CD4-positive, alpha-beta memory T cell (primary cell): ENCODE measurements at regions of chr4 and their contacts with region 1.

Region 1: DNA sequence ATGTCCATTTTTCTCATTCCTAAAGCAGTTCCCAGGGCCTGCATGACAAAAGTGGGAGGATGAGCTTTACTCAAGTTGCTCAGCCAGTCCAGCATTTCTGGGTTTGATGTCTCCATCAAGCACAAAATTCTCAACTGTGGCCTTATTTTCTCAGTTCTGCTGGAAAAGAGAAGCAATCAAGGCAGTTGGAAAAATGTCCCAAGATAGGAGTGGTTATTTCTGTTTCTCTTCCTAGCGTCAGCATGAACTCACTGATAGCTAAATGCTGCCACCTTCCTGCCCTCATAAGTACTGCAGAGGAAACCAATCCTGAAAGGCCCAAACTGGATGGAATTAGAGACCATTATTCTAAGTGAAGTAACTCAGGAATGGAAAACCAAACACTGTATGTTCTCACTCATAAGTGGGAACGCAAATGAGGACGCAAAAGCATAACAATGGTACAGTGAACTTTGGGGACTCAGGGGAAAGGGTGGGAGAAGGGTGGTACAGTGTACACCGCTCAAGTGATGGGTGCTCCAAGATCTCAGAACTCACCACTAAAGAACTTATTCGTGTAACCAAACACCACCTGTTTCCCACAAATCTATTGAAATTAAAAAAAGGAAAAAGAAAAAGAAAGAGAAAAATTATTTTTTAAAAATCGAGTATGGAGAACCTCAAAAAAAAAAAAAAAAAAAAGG is 29.6 kb downstream of the ADH7 start:
- DNase-seq: peak; percentile 43 to 60 (median 49)
- H3K4me3 ChIP-seq: no peak overlapping the region
- H3K4me3 Mint-ChIP-seq: no peak overlapping the region
- H3K27ac ChIP-seq: no peak overlapping the region
- H3K27ac Mint-ChIP-seq: no peak overlapping the region
- H3K4me1 ChIP-seq: no peaks in the 10 kb centered on the region
- H3K4me1 Mint-ChIP-seq: peaks cover 0 to 4% (median 2%) of the 10 kb centered on the region in 4 donors
- H3K27me3 ChIP-seq: no peaks in the 10 kb centered on the region
- H3K27me3 Mint-ChIP-seq: peaks cover 0 to 1% of the 10 kb centered on the region in 2 donors

Region 2: GRCh38 chr4:98113012-98113411 is 1292.6 kb before region 1 on chr4:
- CTCF ChIA-PET with region 1: no interaction called
- POLR2A ChIA-PET with region 1: no interaction called
- intact Hi-C with region 1: loop called (anchors 1 kb)
- DNase-seq: peak in 1 of 5 donors; percentile 5
- H3K4me3 ChIP-seq: no peak overlapping the region
- H3K4me3 Mint-ChIP-seq: no peak overlapping the region
- H3K27ac ChIP-seq: no peak overlapping the region
- H3K27ac Mint-ChIP-seq: no peak overlapping the region
- H3K4me1 ChIP-seq: no peaks in the 10 kb centered on the region
- H3K4me1 Mint-ChIP-seq: no peaks in the 10 kb centered on the region
- H3K27me3 ChIP-seq: no peaks in the 10 kb centered on the region
- H3K27me3 Mint-ChIP-seq: peaks cover 2 to 5% of the 10 kb centered on the region in 2 donors

Region 3: GRCh38 chr4:98150092-98150761 is 1255.3 kb before region 1 on chr4:
- CTCF ChIA-PET with region 1: no interaction called
- POLR2A ChIA-PET with region 1: no interaction called
- intact Hi-C with region 1: loop called (anchors 1 kb)
- DNase-seq: peak in 1 of 5 donors; percentile 3
- H3K4me3 ChIP-seq: no peak overlapping the region
- H3K4me3 Mint-ChIP-seq: no peak overlapping the region
- H3K27ac ChIP-seq: no peak overlapping the region
- H3K27ac Mint-ChIP-seq: no peak overlapping the region
- H3K4me1 ChIP-seq: peaks cover 16% of the 10 kb centered on the region
- H3K4me1 Mint-ChIP-seq: peaks cover 5 to 18% (median 9%) of the 10 kb centered on the region in 4 donors
- H3K27me3 ChIP-seq: no peaks in the 10 kb centered on the region
- H3K27me3 Mint-ChIP-seq: peaks cover 0 to 1% of the 10 kb centered on the region in 2 donors

Region 4: DNA sequence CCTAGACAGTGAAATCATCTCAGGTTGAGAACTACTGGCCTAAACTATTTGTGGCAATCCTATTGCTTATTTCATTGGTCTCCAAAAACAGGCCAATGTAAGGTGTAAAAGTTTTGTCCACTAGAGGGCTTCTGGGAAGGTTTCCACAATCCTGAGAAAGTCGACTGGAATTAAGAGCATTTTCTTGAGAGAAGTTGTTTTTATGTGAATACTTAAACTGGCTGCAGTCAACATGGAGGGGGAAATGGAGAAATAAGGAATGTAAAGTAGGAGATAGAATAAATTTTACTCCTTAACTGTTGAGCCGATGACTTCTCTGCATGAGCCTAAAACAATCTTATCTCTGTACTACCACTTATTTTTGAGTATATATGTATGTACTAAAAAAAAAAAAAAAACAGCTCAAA is 465.7 kb before region 1 on chr4:
- CTCF ChIA-PET with region 1: interaction called, 7 read pairs
- POLR2A ChIA-PET with region 1: no interaction called
- intact Hi-C with region 1: loop called (anchors 1 kb)
- DNase-seq: peak in 4 of 5 donors; percentile 21 to 32 (median 26)
- H3K4me3 ChIP-seq: no peak overlapping the region
- H3K4me3 Mint-ChIP-seq: no peak overlapping the region
- H3K27ac ChIP-seq: no peak overlapping the region
- H3K27ac Mint-ChIP-seq: no peak overlapping the region
- H3K4me1 ChIP-seq: no peaks in the 10 kb centered on the region
- H3K4me1 Mint-ChIP-seq: peaks cover 0 to 12% (median 5%) of the 10 kb centered on the region in 4 donors
- H3K27me3 ChIP-seq: no peaks in the 10 kb centered on the region
- H3K27me3 Mint-ChIP-seq: no peaks in the 10 kb centered on the region

Region 5: DNA sequence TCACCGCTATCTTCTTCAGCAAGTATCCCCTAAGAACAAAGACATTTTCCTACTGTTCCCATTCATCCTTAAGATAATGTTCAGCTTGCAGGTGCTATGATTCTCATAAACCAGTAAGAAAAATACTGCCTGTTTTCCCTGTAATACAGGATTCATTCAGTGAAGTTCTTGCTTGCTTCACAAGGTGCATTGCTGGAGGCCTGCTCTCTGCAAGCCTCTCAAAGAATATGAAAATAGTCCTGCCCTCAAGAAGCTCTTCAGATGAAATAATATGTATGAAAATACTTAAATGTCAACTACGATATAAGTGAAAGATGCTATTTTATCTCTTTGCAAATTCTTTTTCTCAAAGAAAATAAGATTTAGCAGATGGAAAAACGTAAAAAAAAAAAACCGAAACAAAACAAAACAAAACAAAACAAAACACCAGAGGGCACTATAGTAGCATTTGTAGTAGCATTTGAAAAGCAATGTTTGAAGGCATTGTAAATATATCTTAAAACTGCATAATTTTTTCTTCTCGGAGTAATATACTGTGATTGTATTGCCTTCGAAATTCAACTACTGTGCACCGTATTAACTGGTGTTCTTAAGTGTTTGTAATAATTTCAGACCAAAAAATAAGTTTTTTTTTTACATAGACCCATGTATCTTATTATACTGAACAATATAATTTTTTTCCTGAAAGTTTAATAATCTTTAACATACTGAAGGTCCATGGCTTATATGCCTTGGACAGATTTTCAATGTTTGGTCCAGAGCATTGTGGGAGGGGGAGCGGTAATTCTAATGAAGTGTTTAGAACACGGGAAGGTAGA is 287.5 kb before region 1 on chr4:
- CTCF ChIA-PET with region 1: interaction called, 5 read pairs
- POLR2A ChIA-PET with region 1: no interaction called
- intact Hi-C with region 1: loop called (anchors 1 kb)
- DNase-seq: peak in 2 of 5 donors; percentile 4 to 7
- H3K4me3 ChIP-seq: no peak overlapping the region
- H3K4me3 Mint-ChIP-seq: no peak overlapping the region
- H3K27ac ChIP-seq: no peak overlapping the region
- H3K27ac Mint-ChIP-seq: no peak overlapping the region
- H3K4me1 ChIP-seq: no peaks in the 10 kb centered on the region
- H3K4me1 Mint-ChIP-seq: no peaks in the 10 kb centered on the region
- H3K27me3 ChIP-seq: no peaks in the 10 kb centered on the region
- H3K27me3 Mint-ChIP-seq: peaks cover 0 to 1% of the 10 kb centered on the region in 2 donors

Region 6: DNA sequence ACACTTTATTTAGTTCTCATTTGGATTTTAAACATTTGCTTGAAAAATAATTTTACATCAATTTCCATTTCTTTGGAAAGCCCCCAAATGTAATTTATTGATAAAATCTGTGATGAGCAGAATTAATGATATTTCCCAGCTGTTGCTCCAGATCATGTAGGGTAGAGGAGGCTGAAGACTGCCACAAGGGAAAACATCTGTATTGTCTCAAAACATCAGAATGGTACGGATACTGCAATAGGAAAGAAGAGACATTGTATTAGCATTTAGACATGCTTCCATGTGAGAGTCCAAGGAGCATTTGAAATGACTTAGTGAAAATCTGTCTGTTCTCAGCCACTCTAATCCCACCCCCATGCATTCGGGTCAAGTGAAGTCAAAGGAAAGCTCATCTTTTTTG is 129.2 kb before region 1 on chr4:
- CTCF ChIA-PET with region 1: no interaction called
- POLR2A ChIA-PET with region 1: no interaction called
- intact Hi-C with region 1: no loop called
- DNase-seq: no peak
- H3K4me3 ChIP-seq: no peak overlapping the region
- H3K4me3 Mint-ChIP-seq: no peak overlapping the region
- H3K27ac ChIP-seq: no peak overlapping the region
- H3K27ac Mint-ChIP-seq: no peak overlapping the region
- H3K4me1 ChIP-seq: no peaks in the 10 kb centered on the region
- H3K4me1 Mint-ChIP-seq: no peaks in the 10 kb centered on the region
- H3K27me3 ChIP-seq: no peaks in the 10 kb centered on the region
- H3K27me3 Mint-ChIP-seq: peaks cover 2 to 9% of the 10 kb centered on the region in 2 donors

Region 7: GRCh38 chr4:99356992-99357391 is 48.6 kb before region 1 on chr4:
- CTCF ChIA-PET with region 1: no interaction called
- POLR2A ChIA-PET with region 1: no interaction called
- intact Hi-C with region 1: no loop called
- DNase-seq: no peak
- H3K4me3 ChIP-seq: no peak overlapping the region
- H3K4me3 Mint-ChIP-seq: no peak overlapping the region
- H3K27ac ChIP-seq: no peak overlapping the region
- H3K27ac Mint-ChIP-seq: no peak overlapping the region
- H3K4me1 ChIP-seq: no peaks in the 10 kb centered on the region
- H3K4me1 Mint-ChIP-seq: peaks cover 0 to 2% (median 0%) of the 10 kb centered on the region in 4 donors
- H3K27me3 ChIP-seq: no peaks in the 10 kb centered on the region
- H3K27me3 Mint-ChIP-seq: peaks cover 5 to 9% of the 10 kb centered on the region in 2 donors

Region 8: GRCh38 chr4:100494166-100494825 is 1088.7 kb after region 1 on chr4:
- CTCF ChIA-PET with region 1: no interaction called
- POLR2A ChIA-PET with region 1: no interaction called
- intact Hi-C with region 1: no loop called
- DNase-seq: no peak
- H3K4me3 ChIP-seq: no peak overlapping the region
- H3K4me3 Mint-ChIP-seq: no peak overlapping the region
- H3K27ac ChIP-seq: no peak overlapping the region
- H3K27ac Mint-ChIP-seq: no peak overlapping the region
- H3K4me1 ChIP-seq: no peaks in the 10 kb centered on the region
- H3K4me1 Mint-ChIP-seq: no peaks in the 10 kb centered on the region
- H3K27me3 ChIP-seq: no peaks in the 10 kb centered on the region
- H3K27me3 Mint-ChIP-seq: no peaks in the 10 kb centered on the region